Activated CD4-positive, alpha-beta memory T cell treated with anti-CD3 and anti-CD28 coated beads, Interleukin-2, amount 10 ng/mL, durations not matched to agents 7 days and 5 days (primary cell): ENCODE measurements at regions of chr19 and their contacts with region 1.

Region 1: GRCh38 chr19:33235269-33235995 is 9.8 kb upstream of the SLC7A10 start:
- DNase-seq: peak; percentile 75
- H3K4me3 Mint-ChIP-seq: peak overlapping the region; percentile 45
- H3K27ac Mint-ChIP-seq: peak overlapping the region; percentile 28
- H3K4me1 Mint-ChIP-seq: peaks cover 12% of the 10 kb centered on the region
- H3K27me3 Mint-ChIP-seq: peaks cover 24% of the 10 kb centered on the region

Region 2: GRCh38 chr19:33214596-33214995 is 20.8 kb before region 1 on chr19:
- CTCF ChIA-PET with region 1: no interaction called
- POLR2A ChIA-PET with region 1: no interaction called
- DNase-seq: no peak
- H3K4me3 Mint-ChIP-seq: no peak overlapping the region
- H3K27ac Mint-ChIP-seq: no peak overlapping the region
- H3K4me1 Mint-ChIP-seq: no peaks in the 10 kb centered on the region
- H3K27me3 Mint-ChIP-seq: no peaks in the 10 kb centered on the region

Region 3: GRCh38 chr19:33252385-33252962 is 17.0 kb after region 1 on chr19:
- CTCF ChIA-PET with region 1: no interaction called
- POLR2A ChIA-PET with region 1: no interaction called
- DNase-seq: no peak
- H3K4me3 Mint-ChIP-seq: no peak overlapping the region
- H3K27ac Mint-ChIP-seq: no peak overlapping the region
- H3K4me1 Mint-ChIP-seq: no peaks in the 10 kb centered on the region
- H3K27me3 Mint-ChIP-seq: peaks cover 1% of the 10 kb centered on the region

Region 4: GRCh38 chr19:33302175-33302973 is 66.9 kb after region 1 on chr19 and contains the start of gene CEBPA:
- CTCF ChIA-PET with region 1: interaction called, 10 read pairs
- POLR2A ChIA-PET with region 1: no interaction called
- DNase-seq: peak; percentile 56
- H3K4me3 Mint-ChIP-seq: no peak within 1 kb of the TSS
- H3K27ac Mint-ChIP-seq: no peak within 1 kb of the TSS
- H3K4me1 Mint-ChIP-seq: peaks cover 2% of the 10 kb centered on the region
- H3K27me3 Mint-ChIP-seq: peaks cover 43% of the 10 kb centered on the region
- total RNA-seq, gene CEBPA: 0.18 to 0.20 TPM

Region 5: GRCh38 chr19:33320636-33321035 is 85.2 kb after region 1 on chr19:
- CTCF ChIA-PET with region 1: no interaction called
- POLR2A ChIA-PET with region 1: no interaction called
- DNase-seq: no peak
- H3K4me3 Mint-ChIP-seq: no peak overlapping the region
- H3K27ac Mint-ChIP-seq: no peak overlapping the region
- H3K4me1 Mint-ChIP-seq: no peaks in the 10 kb centered on the region
- H3K27me3 Mint-ChIP-seq: peaks cover 15% of the 10 kb centered on the region

Region 6: DNA sequence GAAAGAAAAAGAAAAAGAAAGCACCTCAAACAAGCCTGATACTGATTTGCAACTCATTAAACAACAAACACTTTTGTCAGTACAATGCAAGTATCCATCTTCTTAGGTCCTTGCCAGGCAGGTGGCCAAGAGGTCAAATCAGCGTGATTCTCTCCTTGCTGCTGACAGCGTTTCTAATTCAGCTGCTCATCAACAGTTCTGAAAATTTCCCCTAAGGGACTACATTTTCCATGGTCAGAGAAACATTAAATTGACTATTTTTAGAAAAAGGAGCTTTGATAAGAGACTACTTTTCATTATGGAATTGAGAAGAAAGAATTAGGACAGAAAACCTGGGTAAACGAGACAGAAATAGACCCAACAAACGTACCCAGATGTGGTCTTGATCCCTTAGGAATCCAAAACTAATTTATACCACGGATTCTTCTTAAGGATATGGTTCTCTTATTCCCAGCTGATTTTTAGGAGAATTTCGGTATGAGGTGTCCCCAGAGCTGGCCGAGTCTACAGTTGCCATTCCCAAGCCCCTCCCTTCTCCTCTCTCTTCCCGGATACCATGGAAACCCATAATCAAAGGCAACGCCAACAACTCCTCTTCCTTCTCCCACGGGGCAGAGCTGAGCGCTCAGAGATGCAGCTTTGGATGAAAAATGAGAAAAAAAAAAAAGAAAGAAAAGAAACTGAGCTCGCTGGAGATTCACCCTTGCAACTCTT is 108.6 kb after region 1 on chr19:
- CTCF ChIA-PET with region 1: no interaction called
- POLR2A ChIA-PET with region 1: no interaction called
- DNase-seq: no peak
- H3K4me3 Mint-ChIP-seq: no peak overlapping the region
- H3K27ac Mint-ChIP-seq: no peak overlapping the region
- H3K4me1 Mint-ChIP-seq: no peaks in the 10 kb centered on the region
- H3K27me3 Mint-ChIP-seq: peaks cover 40% of the 10 kb centered on the region

Region 7: GRCh38 chr19:33373701-33374421 is 138.4 kb after region 1 on chr19 and contains the start of gene CEBPG:
- CTCF ChIA-PET with region 1: interaction called, 13 read pairs
- POLR2A ChIA-PET with region 1: interaction called, 3 read pairs
- DNase-seq: no peak
- H3K4me3 Mint-ChIP-seq: peak within 1 kb of the TSS; percentile 88
- H3K27ac Mint-ChIP-seq: peak within 1 kb of the TSS; percentile 82
- H3K4me1 Mint-ChIP-seq: peaks cover 51% of the 10 kb centered on the region
- H3K27me3 Mint-ChIP-seq: no peaks in the 10 kb centered on the region
- total RNA-seq, gene CEBPG: 30.0 to 31.4 TPM

Region 8: GRCh38 chr19:33406521-33407139 is 171.2 kb after region 1 on chr19:
- CTCF ChIA-PET with region 1: interaction called, 39 read pairs
- POLR2A ChIA-PET with region 1: no interaction called
- DNase-seq: peak; percentile 73
- H3K4me3 Mint-ChIP-seq: no peak overlapping the region
- H3K27ac Mint-ChIP-seq: no peak overlapping the region
- H3K4me1 Mint-ChIP-seq: no peaks in the 10 kb centered on the region
- H3K27me3 Mint-ChIP-seq: no peaks in the 10 kb centered on the region